PC-9 (cell line): ENCODE measurements at regions of chr1 and their contacts with region 1.

Region 1: GRCh38 chr1:35340519-35340918 is 72.0 kb downstream of the ZMYM4 start:
- DNase-seq: no peak
- H3K4me3 ChIP-seq: no peak overlapping the region
- H3K27ac ChIP-seq: no peak overlapping the region
- H3K4me1 ChIP-seq: no peaks in the 10 kb centered on the region
- H3K27me3 ChIP-seq: no peaks in the 10 kb centered on the region
- CTCF ChIP-seq: no peak

Region 2: DNA sequence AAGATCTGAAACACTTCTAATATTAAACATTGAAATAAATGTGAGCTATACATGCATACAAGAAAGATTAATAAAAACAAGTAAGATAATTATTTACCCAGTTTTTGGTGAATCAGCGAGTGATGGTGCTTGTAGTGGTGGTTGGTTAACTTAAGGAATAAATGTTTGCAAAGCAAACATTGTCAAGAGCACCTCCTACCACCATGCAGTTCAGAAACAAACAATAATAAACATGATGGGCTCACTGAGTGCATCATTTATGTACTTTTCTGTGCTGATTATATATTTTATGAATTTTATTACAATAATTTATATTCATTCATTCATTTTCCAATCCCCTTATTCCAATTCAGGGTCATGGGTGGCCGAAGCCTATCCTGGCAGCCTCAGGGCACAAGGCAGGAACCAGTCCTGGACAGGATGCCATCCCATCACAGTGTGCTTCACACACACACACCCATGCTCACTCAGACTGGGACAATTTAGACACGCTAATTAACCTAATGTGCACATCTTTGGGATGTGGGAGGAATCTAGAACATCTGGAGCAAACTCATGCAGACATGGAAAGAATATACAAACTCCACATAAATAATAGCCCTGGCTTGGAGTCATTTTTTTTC is 14.2 kb before region 1 on chr1:
- CTCF ChIA-PET with region 1: no interaction called
- POLR2A ChIA-PET with region 1: no interaction called
- intact Hi-C with region 1: loop called (anchors 2 kb)
- DNase-seq: no peak
- H3K4me3 ChIP-seq: no peak overlapping the region
- H3K27ac ChIP-seq: no peak overlapping the region
- H3K4me1 ChIP-seq: no peaks in the 10 kb centered on the region
- H3K27me3 ChIP-seq: no peaks in the 10 kb centered on the region
- CTCF ChIP-seq: no peak